Mammary epithelial cell (primary cell): ENCODE measurements at regions of chr5 and their contacts with region 1.

Region 1: GRCh38 chr5:93249651-93250289 is 331.2 kb downstream of the NR2F1-AS1 start:
- DNase-seq: peak; percentile 53
- H3K4me3 ChIP-seq: peak overlapping the region; percentile 34 to 42 (median 36)
- H3K27ac ChIP-seq: peak overlapping the region; percentile 48
- H3K4me1 ChIP-seq: peaks cover 16% of the 10 kb centered on the region
- H3K27me3 ChIP-seq: no peaks in the 10 kb centered on the region
- CTCF ChIP-seq: no peak

Region 2: GRCh38 chr5:92916036-92916435 is 333.7 kb before region 1 on chr5:
- CTCF ChIA-PET with region 1: no interaction called
- dilution Hi-C with region 1: no loop called
- in situ Hi-C with region 1: no loop called
- intact Hi-C with region 1: loop called (anchors 10 kb)
- DNase-seq: peak; percentile 6
- H3K4me3 ChIP-seq: no peak overlapping the region
- H3K27ac ChIP-seq: no peak overlapping the region
- H3K4me1 ChIP-seq: no peaks in the 10 kb centered on the region
- H3K27me3 ChIP-seq: no peaks in the 10 kb centered on the region
- CTCF ChIP-seq: peak; percentile 17 to 34

Region 3: DNA sequence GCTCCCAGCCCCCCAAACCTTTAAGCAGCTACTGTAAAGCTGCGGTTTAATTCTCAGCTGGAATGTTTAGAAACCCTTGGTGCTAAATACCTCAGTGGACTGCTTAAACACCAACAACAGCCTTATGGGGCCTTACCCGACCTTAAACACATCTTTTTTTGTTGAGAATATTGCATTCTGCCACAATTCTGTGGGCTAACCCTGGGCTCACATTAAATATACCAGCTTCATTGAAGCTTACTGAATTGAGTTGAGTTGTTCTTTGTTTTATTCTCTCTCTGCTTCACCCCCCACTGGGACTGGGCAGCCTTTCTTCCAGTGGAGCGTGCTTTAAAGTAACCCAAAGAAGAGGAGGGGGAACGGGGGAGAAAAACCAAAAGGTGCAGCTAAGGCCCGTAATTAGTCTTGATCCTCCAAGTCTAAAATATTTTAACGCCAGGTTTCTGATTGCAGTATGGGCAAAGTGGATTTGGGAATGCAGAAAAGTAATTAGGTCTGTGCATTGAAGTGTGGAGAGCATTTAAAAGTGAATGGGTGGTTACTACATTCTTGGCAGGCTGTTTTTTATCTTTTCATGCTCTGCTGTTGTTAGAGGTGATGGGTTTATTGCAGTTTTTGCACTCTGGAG is 50.0 kb after region 1 on chr5:
- CTCF ChIA-PET with region 1: no interaction called
- dilution Hi-C with region 1: no loop called
- in situ Hi-C with region 1: no loop called
- intact Hi-C with region 1: no loop called
- DNase-seq: no peak
- H3K4me3 ChIP-seq: no peak overlapping the region
- H3K27ac ChIP-seq: no peak overlapping the region
- H3K4me1 ChIP-seq: peaks cover 16% of the 10 kb centered on the region
- H3K27me3 ChIP-seq: no peaks in the 10 kb centered on the region
- CTCF ChIP-seq: no peak